Naive thymus-derived CD4-positive, alpha-beta T cell (primary cell): ENCODE measurements at regions of chr6 and their contacts with region 1.

Region 1: DNA sequence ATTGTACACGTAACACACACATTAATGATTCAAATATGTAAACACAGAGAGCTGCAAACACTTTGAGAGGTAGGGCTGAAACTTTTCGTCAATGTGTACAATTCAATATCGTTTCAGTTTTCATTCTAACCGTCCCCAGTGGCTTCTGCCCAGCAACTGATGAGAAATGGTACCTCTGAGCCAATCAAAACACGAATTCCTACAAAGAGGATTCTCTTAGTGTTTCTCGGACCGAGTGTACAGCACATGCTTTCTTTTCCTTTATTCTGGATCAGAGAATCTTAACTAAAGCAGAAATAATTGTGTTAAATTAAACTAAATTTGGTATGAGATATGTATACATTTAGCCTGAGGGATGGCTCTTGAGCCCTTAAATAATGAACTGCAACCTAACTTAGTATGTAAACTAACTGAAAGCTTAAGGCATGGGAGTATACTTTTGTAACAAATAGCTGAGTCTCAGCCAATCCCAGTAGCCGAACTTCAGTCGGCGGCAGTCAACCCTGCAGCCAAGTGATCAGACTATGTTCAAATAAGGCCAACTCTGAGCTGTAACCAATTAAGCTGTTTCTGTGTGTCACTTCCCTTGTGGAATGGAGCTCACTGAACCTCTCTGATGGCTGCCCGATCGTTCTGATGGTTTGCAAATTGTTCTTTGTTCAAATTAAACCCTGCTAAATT is 16.1 kb downstream of the BTN2A1 start:
- DNase-seq: peak; percentile 37 to 94 (median 90)
- ATAC-seq: peak; percentile 96
- H3K4me3 ChIP-seq: peak overlapping the region; percentile 67
- H3K4me3 Mint-ChIP-seq: peak overlapping the region; percentile 88 to 100 (median 97)
- H3K27ac ChIP-seq: peak overlapping the region; percentile 91
- H3K27ac Mint-ChIP-seq: peak overlapping the region; percentile 98 to 100 (median 100)
- H3K4me1 ChIP-seq: peaks cover 33% of the 10 kb centered on the region in 2 donors
- H3K4me1 Mint-ChIP-seq: peaks cover 41 to 72% (median 64%) of the 10 kb centered on the region in 7 donors
- H3K27me3 ChIP-seq: no peaks in the 10 kb centered on the region
- H3K27me3 Mint-ChIP-seq: no peaks in the 10 kb centered on the region

Region 2: GRCh38 chr6:26342106-26343004 is 131.5 kb before region 1 on chr6:
- CTCF ChIA-PET with region 1: interaction called, 3 read pairs
- POLR2A ChIA-PET with region 1: no interaction called
- intact Hi-C with region 1: loop called in 1 of 2 experiments (anchors 1 kb)
- DNase-seq: no peak
- ATAC-seq: peak; percentile 4
- H3K4me3 ChIP-seq: peak overlapping the region; percentile 38
- H3K4me3 Mint-ChIP-seq: peak overlapping the region; percentile 55 to 91 (median 70)
- H3K27ac ChIP-seq: no peak overlapping the region
- H3K27ac Mint-ChIP-seq: peak overlapping the region in 2 of 9 donors; percentile 8 to 70
- H3K4me1 ChIP-seq: peaks cover 0 to 3% of the 10 kb centered on the region in 2 donors
- H3K4me1 Mint-ChIP-seq: peaks cover 0 to 22% (median 8%) of the 10 kb centered on the region in 7 donors
- H3K27me3 ChIP-seq: no peaks in the 10 kb centered on the region
- H3K27me3 Mint-ChIP-seq: peaks cover 0 to 18% (median 0%) of the 10 kb centered on the region in 5 donors

Region 3: DNA sequence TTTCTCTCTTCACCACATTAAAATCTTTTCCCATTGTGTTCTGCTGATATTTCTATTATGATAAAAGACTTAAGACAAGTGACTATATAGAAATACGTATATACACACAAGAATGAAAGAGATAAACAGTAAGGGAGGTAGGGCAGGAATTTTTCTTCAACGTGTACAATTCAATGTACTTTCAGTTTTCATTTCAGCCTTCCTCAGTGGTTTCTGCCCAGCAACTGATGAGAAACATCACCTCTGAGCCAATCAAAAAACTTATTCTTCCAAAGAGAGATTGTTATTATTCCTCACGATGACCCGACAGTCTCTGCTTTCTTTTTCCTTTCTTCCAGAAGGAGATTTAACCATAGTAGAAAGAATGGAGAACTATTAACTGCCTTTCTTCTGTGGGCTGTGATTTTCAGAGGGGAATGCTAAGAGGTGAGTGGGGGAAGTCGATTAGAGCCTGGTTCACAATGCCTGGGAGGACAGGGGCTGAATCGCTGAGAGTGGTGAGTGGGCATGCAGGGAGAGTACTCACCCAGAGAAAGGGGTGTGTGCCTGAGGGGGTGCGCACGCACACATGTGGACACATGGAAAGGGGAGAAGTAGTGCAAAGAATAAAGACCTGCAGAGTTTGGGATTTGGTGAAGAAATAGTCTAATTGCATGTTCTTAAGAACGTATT is 71.8 kb before region 1 on chr6 and contains the start of gene BTN3A1:
- CTCF ChIA-PET with region 1: no interaction called
- POLR2A ChIA-PET with region 1: interaction called, 5 read pairs
- intact Hi-C with region 1: loop called (anchors 1 to 2 kb)
- DNase-seq: peak in 8 of 9 donors; percentile 65 to 85 (median 78)
- ATAC-seq: peak; percentile 93
- H3K4me3 ChIP-seq: peak within 1 kb of the TSS; percentile 95
- H3K4me3 Mint-ChIP-seq: peak within 1 kb of the TSS; percentile 94 to 100 (median 100)
- H3K27ac ChIP-seq: peak within 1 kb of the TSS; percentile 96
- H3K27ac Mint-ChIP-seq: peak within 1 kb of the TSS; percentile 97 to 100 (median 99)
- H3K4me1 ChIP-seq: peaks cover 35 to 37% of the 10 kb centered on the region in 2 donors
- H3K4me1 Mint-ChIP-seq: peaks cover 37 to 58% (median 53%) of the 10 kb centered on the region in 7 donors
- H3K27me3 ChIP-seq: no peaks in the 10 kb centered on the region
- H3K27me3 Mint-ChIP-seq: no peaks in the 10 kb centered on the region
- total RNA-seq, gene BTN3A1: 122 to 242 (median 235) TPM

Region 4: DNA sequence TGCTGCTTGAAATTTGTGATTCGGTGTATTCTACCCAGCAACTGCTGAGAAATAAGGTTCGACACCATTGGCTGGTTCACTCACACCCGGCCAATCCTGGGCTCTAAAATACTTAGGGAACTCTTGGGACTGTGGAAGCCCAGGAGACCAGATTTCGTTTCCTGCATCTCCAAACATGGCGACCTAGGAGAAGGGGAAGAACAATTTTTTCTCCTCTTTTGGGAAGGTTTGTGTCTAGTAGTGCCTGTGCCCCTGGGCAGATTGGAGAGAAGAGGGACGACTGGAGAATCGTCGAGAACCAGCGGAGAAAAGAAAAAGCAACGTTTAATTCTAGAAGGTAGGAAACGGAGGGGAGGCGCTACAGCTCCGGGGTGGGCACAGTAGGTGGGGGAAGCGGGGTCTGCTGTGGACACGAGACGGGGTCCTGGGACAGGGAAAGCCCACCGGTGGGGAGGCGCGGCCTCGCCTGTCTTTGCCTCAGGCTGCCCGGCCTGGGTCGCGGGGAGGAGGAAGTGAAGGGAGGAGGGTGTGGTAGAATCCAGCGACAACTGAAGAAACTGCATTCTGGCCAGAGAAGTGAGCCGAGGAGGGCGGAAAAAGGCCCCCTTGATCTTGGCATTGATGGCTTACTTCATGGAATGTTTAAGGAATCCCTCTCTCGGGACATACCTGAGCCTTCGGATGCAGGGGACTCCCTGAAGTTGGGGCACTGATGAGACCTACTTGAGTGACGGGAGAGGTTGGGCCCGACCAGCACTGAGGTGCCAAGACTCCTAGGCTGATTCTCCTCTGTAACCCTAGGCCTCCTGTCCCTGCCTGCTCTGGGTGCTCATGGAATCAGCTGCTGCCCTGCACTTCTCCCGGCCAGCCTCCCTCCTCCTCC is 15.9 kb before region 1 on chr6 and contains the start of gene BTN2A1:
- CTCF ChIA-PET with region 1: no interaction called
- POLR2A ChIA-PET with region 1: interaction called, 13 read pairs
- intact Hi-C with region 1: loop called (anchors 1 kb)
- DNase-seq: peak in 8 of 9 donors; percentile 59 to 86 (median 78)
- ATAC-seq: peak; percentile 99
- H3K4me3 ChIP-seq: peak within 1 kb of the TSS; percentile 93
- H3K4me3 Mint-ChIP-seq: peak within 1 kb of the TSS; percentile 90 to 100 (median 98)
- H3K27ac ChIP-seq: peak within 1 kb of the TSS; percentile 81
- H3K27ac Mint-ChIP-seq: peak within 1 kb of the TSS; percentile 89 to 99 (median 94)
- H3K4me1 ChIP-seq: peaks cover 27 to 38% of the 10 kb centered on the region in 2 donors
- H3K4me1 Mint-ChIP-seq: peaks cover 43 to 75% (median 60%) of the 10 kb centered on the region in 7 donors
- H3K27me3 ChIP-seq: no peaks in the 10 kb centered on the region
- H3K27me3 Mint-ChIP-seq: no peaks in the 10 kb centered on the region
- total RNA-seq, gene BTN2A1: 29.0 to 54.6 (median 37.2) TPM

Region 5: DNA sequence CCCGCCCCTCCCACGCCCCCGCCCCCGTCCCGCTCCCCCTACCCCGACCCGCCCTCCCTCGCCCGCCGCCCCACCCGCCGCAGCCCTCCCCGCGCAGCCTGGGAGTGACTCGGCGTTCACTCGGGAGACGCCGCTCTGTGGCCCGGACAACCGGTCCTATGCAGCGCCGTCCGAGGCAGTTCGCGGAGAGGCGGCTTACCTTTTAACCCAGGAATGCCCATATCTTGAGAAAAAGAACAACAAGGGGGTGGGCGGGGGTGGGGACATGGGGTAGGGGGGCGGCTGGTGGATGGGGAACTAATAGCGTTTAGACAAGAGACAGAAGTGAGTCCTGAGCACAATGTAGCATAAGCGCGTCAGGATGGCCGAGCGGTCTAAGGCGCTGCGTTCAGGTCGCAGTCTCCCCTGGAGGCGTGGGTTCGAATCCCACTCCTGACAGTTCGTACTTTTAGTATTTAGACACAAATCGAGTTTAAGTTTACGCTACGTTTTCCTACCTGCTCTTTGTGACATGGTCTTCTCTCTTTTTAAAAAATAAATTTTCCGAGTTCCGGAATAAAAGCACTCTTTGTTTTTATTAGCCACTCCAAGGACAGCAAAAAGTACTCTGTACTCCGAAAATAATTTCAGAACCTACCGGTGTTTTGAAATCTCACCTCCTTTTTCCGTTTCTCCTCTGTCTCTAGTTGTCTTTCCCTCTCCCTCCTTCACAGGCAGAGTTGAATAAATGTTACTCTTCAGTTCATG is 47.1 kb after region 1 on chr6:
- CTCF ChIA-PET with region 1: interaction called, 3 read pairs
- POLR2A ChIA-PET with region 1: interaction called, 32 read pairs
- intact Hi-C with region 1: loop called (anchors 1 kb)
- DNase-seq: peak; percentile 74 to 90 (median 87)
- ATAC-seq: peak; percentile 84
- H3K4me3 ChIP-seq: peak overlapping the region; percentile 61
- H3K4me3 Mint-ChIP-seq: peak overlapping the region; percentile 73 to 100 (median 91)
- H3K27ac ChIP-seq: peak overlapping the region; percentile 69
- H3K27ac Mint-ChIP-seq: peak overlapping the region; percentile 91 to 98 (median 97)
- H3K4me1 ChIP-seq: peaks cover 8 to 15% of the 10 kb centered on the region in 2 donors
- H3K4me1 Mint-ChIP-seq: peaks cover 6 to 42% (median 35%) of the 10 kb centered on the region in 7 donors
- H3K27me3 ChIP-seq: no peaks in the 10 kb centered on the region
- H3K27me3 Mint-ChIP-seq: peaks cover 0 to 6% (median 0%) of the 10 kb centered on the region in 5 donors

Region 6: DNA sequence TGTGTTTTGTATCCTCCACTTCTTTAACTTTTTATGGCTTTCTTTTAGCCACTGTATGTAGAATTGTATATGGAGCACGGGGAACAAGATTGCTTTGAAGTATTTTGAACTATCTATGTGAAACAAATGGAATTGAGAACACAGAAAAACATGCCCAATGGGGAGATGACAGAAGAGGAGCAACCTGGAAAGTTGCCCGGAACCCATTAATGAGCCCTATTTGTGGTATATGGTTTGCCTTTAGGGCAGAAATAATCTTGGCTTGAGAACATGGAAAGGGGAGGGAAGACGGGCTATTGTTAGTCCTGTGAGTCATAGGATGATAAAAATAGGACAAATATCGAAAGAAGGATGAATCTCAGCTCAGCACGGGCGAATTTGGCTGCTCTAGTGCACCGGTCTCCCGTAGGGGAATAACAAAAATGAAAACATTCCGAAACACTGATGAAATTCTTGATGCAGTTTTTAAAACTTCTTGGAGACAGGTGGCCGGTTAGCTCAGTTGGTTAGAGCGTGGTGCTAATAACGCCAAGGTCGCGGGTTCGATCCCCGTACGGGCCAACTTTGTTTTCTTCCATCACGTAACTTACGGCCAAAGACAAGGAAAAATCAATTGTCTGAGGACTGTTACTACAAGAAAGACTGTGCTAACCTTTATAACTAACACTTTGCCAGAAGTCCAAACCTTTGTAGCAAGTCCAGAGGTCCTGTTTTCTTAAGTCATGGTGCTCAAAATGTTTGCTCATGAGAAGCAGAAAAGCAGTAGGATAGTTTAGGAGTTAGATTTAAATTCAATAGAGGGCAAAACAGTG is 79.9 kb after region 1 on chr6:
- CTCF ChIA-PET with region 1: no interaction called
- POLR2A ChIA-PET with region 1: interaction called, 4 read pairs
- intact Hi-C with region 1: loop called in 1 of 2 experiments (anchors 1 kb)
- DNase-seq: peak; percentile 44 to 86 (median 83)
- ATAC-seq: peak; percentile 66
- H3K4me3 ChIP-seq: peak overlapping the region; percentile 75
- H3K4me3 Mint-ChIP-seq: no peak overlapping the region
- H3K27ac ChIP-seq: peak overlapping the region; percentile 65
- H3K27ac Mint-ChIP-seq: no peak overlapping the region
- H3K4me1 ChIP-seq: peaks cover 7 to 18% of the 10 kb centered on the region in 2 donors
- H3K4me1 Mint-ChIP-seq: peaks cover 12 to 35% (median 24%) of the 10 kb centered on the region in 7 donors
- H3K27me3 ChIP-seq: no peaks in the 10 kb centered on the region
- H3K27me3 Mint-ChIP-seq: peaks cover 0 to 2% (median 0%) of the 10 kb centered on the region in 5 donors